ENCODE measurements at regions of chr4 and their contacts with region 1.

Region 1: GRCh38 chr4:602559-602942 is 22.8 kb upstream of the PDE6B start:
- DNase-seq: peak in 7 of 10 donors; percentile 29 to 94 (median 75)

Region 2: DNA sequence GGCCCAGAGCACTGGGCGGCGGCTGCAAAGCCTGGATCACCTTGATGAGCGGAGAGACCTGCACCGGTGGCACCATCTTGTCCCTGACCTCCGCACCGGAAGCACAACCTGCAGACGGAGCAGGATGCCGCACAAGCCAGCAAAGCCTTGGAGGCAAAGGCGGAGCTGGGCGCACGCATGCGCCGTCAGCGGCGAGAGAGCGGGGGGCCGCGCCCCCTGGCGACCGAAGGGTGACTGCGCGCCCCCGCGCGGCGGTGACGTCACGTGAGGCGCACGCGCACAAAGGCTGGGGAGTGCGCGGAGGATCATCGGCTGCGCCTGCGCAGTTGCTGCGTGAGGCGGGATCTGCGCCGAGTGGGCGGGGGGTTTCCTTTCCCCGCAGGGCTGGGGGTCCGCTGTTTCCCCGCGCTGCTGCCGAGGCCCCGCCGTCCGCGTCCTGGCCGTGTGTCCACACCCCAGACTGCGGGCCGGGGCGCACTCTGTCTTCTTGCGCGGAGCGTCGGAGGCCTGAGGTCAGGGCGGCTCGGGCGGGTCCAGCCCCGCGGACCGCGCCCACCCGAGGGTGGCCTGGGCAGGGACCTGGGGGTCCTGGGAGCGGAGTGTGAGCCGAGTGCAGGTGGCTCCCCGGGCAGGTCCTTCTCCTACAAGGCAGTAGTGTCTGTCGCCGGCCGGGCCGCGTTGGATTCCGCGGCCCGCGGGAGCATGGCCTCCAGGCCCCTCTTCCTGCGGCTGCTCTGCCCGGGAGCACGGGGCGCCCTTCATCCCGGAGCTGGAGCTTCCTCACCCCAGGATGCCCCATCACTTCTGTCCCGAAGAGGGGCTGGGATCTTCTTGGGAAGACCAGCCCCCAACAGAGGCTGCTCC is 71.9 kb after region 1 on chr4 and contains the starts of genes ATP5ME and MYL5:
- intact Hi-C with region 1: loop called (anchors 10 kb)
- DNase-seq: peak; percentile 91 to 99 (median 95)

Region 3: GRCh38 chr4:705278-706082 is 102.9 kb after region 1 on chr4 and contains the start of gene PCGF3:
- intact Hi-C with region 1: no loop called
- DNase-seq: peak; percentile 86 to 99 (median 94)

Region 4: DNA sequence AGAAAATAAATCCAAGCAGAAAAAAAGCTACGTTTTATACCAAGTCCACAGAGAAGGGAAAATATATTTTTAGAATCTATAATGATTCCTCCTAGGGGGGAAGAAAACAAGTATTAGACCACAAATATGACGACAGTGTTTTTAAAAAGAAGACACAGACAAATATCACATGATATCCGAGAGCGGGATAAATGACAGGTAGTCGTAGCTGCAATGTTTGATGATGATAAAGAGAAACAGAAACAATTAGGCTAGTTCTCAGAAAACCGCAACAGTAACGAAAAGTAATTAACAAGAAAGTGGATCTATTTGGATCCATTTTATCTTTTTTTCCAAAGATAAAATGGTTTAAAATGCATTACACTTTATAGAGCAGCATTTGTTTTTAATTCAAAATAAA is 1638.5 kb after region 1 on chr4:
- intact Hi-C with region 1: no loop called
- DNase-seq: no peak

Measured in posterior cingulate gyrus (tissue), 11 donors.